ENCODE measurements at regions of chr2 and their contacts with region 1.

Region 1: GRCh38 chr2:222860740-222861410 is at the start of gene ACSL3:
- DNase-seq: peak; percentile 95 to 96
- ATAC-seq: peak; percentile 86 to 89
- H3K4me3 ChIP-seq: peak within 1 kb of the TSS; percentile 68 to 96 (median 81)
- H3K27ac ChIP-seq: peak within 1 kb of the TSS; percentile 86 to 98 (median 90)
- H3K4me1 ChIP-seq: peaks cover 45 to 51% of the 10 kb centered on the region in 2 donors
- H3K27me3 ChIP-seq: no peaks in the 10 kb centered on the region
- CTCF ChIP-seq: peak in 3 of 5 experiments; percentile 15 to 43 (median 32)
- POLR2A ChIP-seq: peak; percentile 96 to 99
- total RNA-seq, gene ACSL3: 34.7 to 56.8 (median 38.2) TPM

Region 2: GRCh38 chr2:221549143-221549542 is 1311.7 kb before region 1 on chr2:
- in situ Hi-C with region 1: no loop called
- intact Hi-C with region 1: no loop called
- DNase-seq: no peak
- ATAC-seq: no peak
- H3K4me3 ChIP-seq: no peak overlapping the region
- H3K27ac ChIP-seq: no peak overlapping the region
- H3K4me1 ChIP-seq: peaks cover 12 to 15% of the 10 kb centered on the region in 2 donors
- H3K27me3 ChIP-seq: no peaks in the 10 kb centered on the region
- CTCF ChIP-seq: no peak
- POLR2A ChIP-seq: no peak

Region 3: GRCh38 chr2:222506230-222506935 is 354.5 kb before region 1 on chr2:
- in situ Hi-C with region 1: no loop called
- intact Hi-C with region 1: no loop called
- DNase-seq: no peak
- ATAC-seq: no peak
- H3K4me3 ChIP-seq: no peak overlapping the region
- H3K27ac ChIP-seq: no peak overlapping the region
- H3K4me1 ChIP-seq: no peaks in the 10 kb centered on the region
- H3K27me3 ChIP-seq: no peaks in the 10 kb centered on the region
- CTCF ChIP-seq: no peak
- POLR2A ChIP-seq: no peak

Region 4: GRCh38 chr2:222797261-222797660 is 63.6 kb before region 1 on chr2:
- in situ Hi-C with region 1: no loop called
- intact Hi-C with region 1: loop called (anchors 1 kb)
- DNase-seq: no peak
- ATAC-seq: peak in 1 of 2 donors; percentile 51
- H3K4me3 ChIP-seq: no peak overlapping the region
- H3K27ac ChIP-seq: peak overlapping the region in 2 of 4 donors; percentile 30 to 46
- H3K4me1 ChIP-seq: peaks cover 18 to 20% of the 10 kb centered on the region in 2 donors
- H3K27me3 ChIP-seq: no peaks in the 10 kb centered on the region
- CTCF ChIP-seq: peak in 3 of 5 experiments; percentile 41 to 55 (median 49)
- POLR2A ChIP-seq: no peak

Region 5: DNA sequence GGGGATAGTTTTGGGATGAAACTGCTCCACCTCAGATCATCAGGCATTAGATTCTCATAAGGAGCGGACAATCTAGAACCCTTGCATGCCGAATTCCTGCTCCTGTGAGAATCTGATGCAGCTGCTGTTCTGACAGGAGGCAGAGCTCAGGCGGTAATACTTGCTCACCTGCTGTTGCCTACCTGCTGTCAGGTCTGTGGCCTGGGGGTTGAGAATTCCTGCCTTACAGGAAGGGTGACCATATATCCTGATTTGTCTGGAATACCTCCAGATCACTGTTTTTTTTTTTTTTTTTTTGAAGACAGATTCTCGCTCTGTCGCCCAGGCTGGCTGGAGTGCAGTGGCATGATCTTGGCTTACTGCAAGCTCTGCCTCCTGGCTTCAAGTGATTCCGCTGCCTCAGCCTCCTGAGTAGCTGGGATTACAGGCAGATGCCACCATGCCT is 21.6 kb after region 1 on chr2:
- in situ Hi-C with region 1: no loop called
- intact Hi-C with region 1: loop called (anchors 2 kb)
- DNase-seq: peak in 1 of 2 donors; percentile 46
- ATAC-seq: peak; percentile 28 to 32
- H3K4me3 ChIP-seq: no peak overlapping the region
- H3K27ac ChIP-seq: peak overlapping the region; percentile 51 to 75 (median 72)
- H3K4me1 ChIP-seq: peaks cover 86 to 96% of the 10 kb centered on the region in 2 donors
- H3K27me3 ChIP-seq: no peaks in the 10 kb centered on the region
- CTCF ChIP-seq: no peak
- POLR2A ChIP-seq: no peak

Region 6: GRCh38 chr2:222903234-222904220 is 42.7 kb after region 1 on chr2:
- in situ Hi-C with region 1: no loop called
- intact Hi-C with region 1: loop called (anchors 5 kb)
- DNase-seq: no peak
- ATAC-seq: peak; percentile 58 to 70
- H3K4me3 ChIP-seq: no peak overlapping the region
- H3K27ac ChIP-seq: peak overlapping the region in 2 of 4 donors; percentile 32 to 42
- H3K4me1 ChIP-seq: peaks cover 44% of the 10 kb centered on the region in 2 donors
- H3K27me3 ChIP-seq: no peaks in the 10 kb centered on the region
- CTCF ChIP-seq: peak; percentile 52 to 75 (median 66)
- POLR2A ChIP-seq: no peak

Region 7: DNA sequence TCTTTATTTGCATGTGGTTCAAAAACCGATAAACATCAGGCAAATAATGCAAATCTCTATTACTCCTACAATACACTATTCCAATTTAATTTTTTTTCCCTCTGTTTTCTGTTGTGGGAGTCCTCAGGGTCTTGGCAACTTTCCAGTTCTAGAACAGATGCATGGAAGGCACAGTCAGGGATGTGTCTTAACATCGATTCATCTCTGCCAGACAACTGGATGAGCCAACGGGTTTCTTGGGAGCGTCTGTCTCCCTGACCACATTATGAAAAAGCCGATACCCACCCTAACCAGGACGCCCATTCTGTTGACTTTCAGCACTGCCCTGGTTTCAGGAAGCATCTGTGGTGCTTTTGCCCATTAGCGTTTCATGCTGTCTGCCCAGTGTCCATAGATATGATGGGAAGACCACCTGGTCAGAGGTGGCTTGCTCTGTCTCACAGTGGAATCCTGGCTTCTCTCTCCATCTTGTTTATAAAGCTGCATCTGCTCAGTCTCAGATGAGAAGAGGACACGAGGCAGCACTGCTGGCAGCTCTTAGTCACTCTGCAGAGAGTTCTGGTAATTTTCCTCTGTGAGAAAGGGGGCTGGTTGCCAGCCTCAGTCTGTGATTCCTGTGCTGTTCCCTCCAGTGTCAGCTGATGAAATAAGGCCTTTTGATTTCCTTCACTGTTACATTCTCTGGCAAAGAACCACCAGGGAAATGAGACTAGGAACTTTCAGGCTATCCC is 133.2 kb after region 1 on chr2:
- in situ Hi-C with region 1: no loop called
- intact Hi-C with region 1: no loop called
- DNase-seq: peak; percentile 89 to 90
- ATAC-seq: peak; percentile 99
- H3K4me3 ChIP-seq: peak overlapping the region in 2 of 4 donors; percentile 38 to 47
- H3K27ac ChIP-seq: peak overlapping the region; percentile 73 to 89 (median 80)
- H3K4me1 ChIP-seq: peaks cover 5 to 18% of the 10 kb centered on the region in 2 donors
- H3K27me3 ChIP-seq: no peaks in the 10 kb centered on the region
- CTCF ChIP-seq: no peak
- POLR2A ChIP-seq: no peak

Measured in gastrocnemius medialis (tissue), 4 donors.